Lower leg skin (tissue), 4 donors: ENCODE measurements at regions of chr7 and their contacts with region 1.

Region 1: GRCh38 chr7:74544706-74545469 is 91.2 kb downstream of the GTF2IRD1 start:
- DNase-seq: no peak
- H3K4me3 ChIP-seq: no peak overlapping the region
- CTCF ChIP-seq: no peak
- POLR2A ChIP-seq: no peak

Region 2: GRCh38 chr7:74400341-74401136 is 144.3 kb before region 1 on chr7:
- intact Hi-C with region 1: no loop called
- DNase-seq: no peak
- H3K4me3 ChIP-seq: no peak overlapping the region
- CTCF ChIP-seq: no peak
- POLR2A ChIP-seq: no peak

Region 3: GRCh38 chr7:74429153-74429747 is 115.6 kb before region 1 on chr7:
- intact Hi-C with region 1: no loop called
- DNase-seq: no peak
- H3K4me3 ChIP-seq: no peak overlapping the region
- CTCF ChIP-seq: no peak
- POLR2A ChIP-seq: no peak

Region 4: DNA sequence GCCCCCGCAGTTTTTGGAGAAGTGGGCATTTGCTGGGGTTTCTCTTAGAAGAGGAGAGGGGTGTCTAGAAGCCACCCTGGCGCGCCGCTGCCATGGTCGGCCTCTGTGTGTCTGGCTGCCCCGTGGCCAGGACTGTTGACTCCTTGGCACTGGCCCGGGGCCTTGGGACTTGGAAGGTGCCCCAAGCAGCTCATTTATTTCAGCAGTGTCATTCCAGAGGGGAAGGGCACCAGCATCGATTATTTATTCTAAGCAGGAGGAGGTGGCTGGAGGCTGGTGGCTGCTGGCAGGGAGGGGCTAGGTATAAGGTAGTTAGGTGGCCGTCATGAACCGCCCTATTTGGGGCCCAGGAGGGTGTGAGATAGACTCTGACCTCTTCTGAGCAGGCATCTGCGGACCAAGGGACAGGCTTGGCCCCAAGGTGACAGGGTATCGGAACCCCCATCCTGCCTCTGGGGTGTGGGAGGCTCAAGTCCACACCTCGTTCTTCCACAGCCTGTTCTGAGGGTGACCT is 89.5 kb before region 1 on chr7:
- intact Hi-C with region 1: no loop called
- DNase-seq: no peak
- H3K4me3 ChIP-seq: no peak overlapping the region
- CTCF ChIP-seq: no peak
- POLR2A ChIP-seq: no peak

Region 5: DNA sequence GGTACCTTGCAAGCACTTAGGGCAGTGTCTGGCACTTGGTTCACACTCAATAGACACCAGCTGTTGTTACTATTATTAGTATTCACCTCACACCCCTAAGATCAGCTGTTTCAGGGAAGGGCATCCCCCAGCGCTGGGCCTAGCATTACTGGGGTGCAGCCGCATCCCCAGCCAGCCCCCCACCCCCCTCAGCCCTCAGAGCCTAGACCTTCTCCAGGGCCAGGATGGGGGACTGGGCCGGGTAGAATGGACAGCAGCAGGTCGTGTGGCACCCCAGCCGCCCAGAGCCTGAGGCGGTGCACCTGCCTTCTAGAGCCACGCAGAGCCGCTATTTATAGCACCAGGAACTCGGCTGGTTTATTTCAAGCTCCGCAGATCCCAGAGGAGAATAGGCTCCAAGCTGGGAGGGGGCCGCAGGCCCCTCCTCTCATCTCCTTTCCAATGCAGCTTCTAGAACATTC is 30.7 kb before region 1 on chr7:
- intact Hi-C with region 1: no loop called
- DNase-seq: no peak
- H3K4me3 ChIP-seq: no peak overlapping the region
- CTCF ChIP-seq: no peak
- POLR2A ChIP-seq: no peak

Region 6: DNA sequence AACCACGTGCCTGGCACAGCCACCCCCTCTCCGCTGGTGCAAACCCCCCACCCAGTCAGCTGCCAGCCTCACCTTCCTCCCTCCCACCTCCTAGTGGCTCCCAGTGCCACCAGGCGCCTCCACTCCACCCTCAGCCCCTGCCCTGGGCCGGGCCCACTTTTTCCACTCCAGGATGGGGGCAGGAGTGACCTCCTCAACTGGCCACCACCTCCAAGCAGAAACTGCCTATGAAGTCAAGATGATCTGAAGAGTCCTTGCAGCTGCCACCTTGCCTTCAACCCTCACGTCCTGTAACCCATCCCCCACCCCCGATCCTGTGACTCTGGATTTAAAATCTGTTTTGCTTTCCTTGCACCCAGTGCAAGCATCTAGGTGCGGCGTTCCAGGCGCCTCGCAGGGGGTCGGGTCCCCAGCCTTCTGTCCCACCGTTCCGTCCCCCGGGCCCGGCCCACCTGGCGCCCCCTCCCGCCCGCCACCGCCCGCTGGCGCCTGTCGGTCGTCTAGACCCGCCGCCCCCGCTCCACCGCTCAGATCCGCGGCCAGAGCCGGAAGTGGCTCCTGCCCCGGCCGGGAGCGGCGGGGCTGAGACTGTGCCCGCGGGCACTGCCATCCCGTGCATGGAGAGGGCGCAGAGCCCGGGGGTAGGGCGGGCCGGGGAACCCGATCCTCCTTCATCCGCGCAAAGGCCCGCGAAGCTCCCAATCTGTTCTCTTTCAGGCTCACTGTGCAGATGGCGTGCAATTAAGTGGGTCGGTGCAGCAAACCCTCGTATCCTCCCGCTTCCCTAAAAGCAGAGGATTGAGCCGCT is 61.4 kb after region 1 on chr7:
- intact Hi-C with region 1: loop called (anchors 10 kb)
- DNase-seq: no peak
- H3K4me3 ChIP-seq: no peak overlapping the region
- CTCF ChIP-seq: no peak
- POLR2A ChIP-seq: no peak